ENCODE measurements at regions of chr14 and their contacts with region 1.

Region 1: DNA sequence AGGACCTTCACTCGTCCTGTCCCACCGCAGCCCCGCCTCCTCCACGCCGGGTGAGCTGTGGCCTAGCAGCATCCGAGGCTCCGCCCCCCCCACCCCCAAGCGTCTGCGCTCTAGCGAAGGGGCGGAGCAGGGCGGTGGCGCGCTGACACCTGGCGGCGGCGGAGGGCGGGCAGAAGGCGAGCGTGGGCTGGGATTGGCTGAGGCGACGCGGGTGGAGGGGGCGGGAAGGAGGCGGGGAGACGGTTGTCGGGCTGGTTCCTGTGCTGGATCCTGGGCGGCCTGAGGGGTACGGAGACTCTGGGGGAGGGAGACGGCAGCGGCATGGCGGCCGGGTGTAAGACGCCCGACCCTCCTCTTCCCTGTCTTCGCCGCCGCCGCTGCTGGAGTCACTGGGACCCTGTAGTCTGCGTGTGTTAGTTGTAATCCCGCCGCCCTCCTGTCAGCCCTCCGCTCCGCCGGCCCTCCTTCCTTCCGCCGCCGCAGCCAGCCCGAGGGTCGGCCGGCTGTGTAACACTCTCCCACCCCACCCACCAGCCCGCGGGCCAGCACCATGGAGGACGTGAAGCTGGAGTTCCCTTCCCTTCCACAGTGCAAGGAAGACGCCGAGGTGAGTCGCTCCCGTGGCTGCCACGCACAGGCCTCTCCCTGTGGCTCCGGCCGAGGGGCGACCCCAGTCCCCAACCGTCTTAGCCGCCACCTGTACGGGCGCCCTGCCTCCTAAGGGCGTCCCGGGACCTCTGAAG is at the start of gene STYX:
- DNase-seq: peak; percentile 96
- H3K4me3 Mint-ChIP-seq: peak within 1 kb of the TSS; percentile 95
- H3K27ac Mint-ChIP-seq: peak within 1 kb of the TSS; percentile 80
- H3K4me1 Mint-ChIP-seq: peaks cover 18% of the 10 kb centered on the region
- H3K27me3 Mint-ChIP-seq: no peaks in the 10 kb centered on the region
- total RNA-seq, gene STYX: 16.3 and 16.5 TPM in 2 replicates

Region 2: DNA sequence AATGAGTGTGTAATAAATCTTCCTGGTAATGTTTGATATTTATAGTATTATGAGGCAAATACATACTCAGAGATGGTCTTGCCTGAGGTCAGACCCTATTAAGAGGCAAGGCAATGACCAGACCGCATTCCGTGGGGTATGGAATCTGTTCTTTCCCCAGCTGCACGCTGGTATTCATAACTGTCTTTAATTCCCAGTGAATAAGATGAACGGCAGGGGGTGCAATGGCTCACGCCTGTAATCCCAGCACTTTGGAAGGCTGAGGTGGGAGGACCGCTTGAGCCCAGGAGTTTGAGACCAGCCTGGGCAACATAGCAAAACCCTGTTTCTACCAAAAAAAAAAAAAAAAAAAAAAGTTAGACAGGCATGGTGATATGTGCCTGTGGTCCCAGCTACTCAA is 79.3 kb before region 1 on chr14:
- intact Hi-C with region 1: no loop called
- DNase-seq: no peak
- H3K4me3 Mint-ChIP-seq: no peak overlapping the region
- H3K27ac Mint-ChIP-seq: no peak overlapping the region
- H3K4me1 Mint-ChIP-seq: peaks cover 6% of the 10 kb centered on the region
- H3K27me3 Mint-ChIP-seq: no peaks in the 10 kb centered on the region

Region 3: GRCh38 chr14:52678591-52678990 is 51.5 kb before region 1 on chr14:
- intact Hi-C with region 1: loop called (anchors 10 kb)
- DNase-seq: no peak
- H3K4me3 Mint-ChIP-seq: no peak overlapping the region
- H3K27ac Mint-ChIP-seq: no peak overlapping the region
- H3K4me1 Mint-ChIP-seq: peaks cover 3% of the 10 kb centered on the region
- H3K27me3 Mint-ChIP-seq: no peaks in the 10 kb centered on the region

Region 4: DNA sequence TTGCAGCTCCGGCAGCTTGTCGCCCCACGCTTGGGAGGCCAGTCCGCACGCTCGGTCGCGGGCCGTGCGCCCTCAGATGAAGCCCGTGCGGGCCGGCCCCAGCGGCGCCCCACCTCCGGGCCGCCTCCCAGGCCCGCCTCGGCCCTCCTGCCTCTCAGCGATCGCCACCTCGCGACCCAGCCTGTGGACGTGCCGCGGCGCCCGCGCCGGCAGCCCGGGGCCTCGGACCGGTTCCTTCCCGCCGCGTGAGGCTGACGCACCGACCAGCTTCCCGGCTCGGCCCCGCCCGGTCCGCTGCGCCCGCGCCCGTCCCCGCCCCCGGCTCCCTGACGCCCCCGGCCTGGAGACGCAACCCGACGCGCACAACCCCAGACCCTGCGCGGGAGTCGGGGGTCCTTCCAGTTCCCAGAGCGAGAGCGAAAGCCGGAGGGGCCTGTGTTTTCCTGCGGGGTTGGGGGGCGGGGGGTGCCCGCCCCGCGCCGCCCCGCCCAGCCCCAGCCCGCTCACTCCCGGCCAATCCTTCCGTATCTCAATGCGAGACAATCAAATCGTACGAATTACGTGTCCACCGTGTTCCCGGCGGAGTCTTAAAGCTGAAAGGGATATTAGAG is 34.5 kb before region 1 on chr14 and contains the start of gene ERO1A:
- intact Hi-C with region 1: loop called (anchors 1 kb)
- DNase-seq: peak; percentile 65
- H3K4me3 Mint-ChIP-seq: peak within 1 kb of the TSS; percentile 98
- H3K27ac Mint-ChIP-seq: peak within 1 kb of the TSS; percentile 99
- H3K4me1 Mint-ChIP-seq: peaks cover 29% of the 10 kb centered on the region
- H3K27me3 Mint-ChIP-seq: no peaks in the 10 kb centered on the region
- total RNA-seq, gene ERO1A: 219 and 226 TPM in 2 replicates

Region 5: DNA sequence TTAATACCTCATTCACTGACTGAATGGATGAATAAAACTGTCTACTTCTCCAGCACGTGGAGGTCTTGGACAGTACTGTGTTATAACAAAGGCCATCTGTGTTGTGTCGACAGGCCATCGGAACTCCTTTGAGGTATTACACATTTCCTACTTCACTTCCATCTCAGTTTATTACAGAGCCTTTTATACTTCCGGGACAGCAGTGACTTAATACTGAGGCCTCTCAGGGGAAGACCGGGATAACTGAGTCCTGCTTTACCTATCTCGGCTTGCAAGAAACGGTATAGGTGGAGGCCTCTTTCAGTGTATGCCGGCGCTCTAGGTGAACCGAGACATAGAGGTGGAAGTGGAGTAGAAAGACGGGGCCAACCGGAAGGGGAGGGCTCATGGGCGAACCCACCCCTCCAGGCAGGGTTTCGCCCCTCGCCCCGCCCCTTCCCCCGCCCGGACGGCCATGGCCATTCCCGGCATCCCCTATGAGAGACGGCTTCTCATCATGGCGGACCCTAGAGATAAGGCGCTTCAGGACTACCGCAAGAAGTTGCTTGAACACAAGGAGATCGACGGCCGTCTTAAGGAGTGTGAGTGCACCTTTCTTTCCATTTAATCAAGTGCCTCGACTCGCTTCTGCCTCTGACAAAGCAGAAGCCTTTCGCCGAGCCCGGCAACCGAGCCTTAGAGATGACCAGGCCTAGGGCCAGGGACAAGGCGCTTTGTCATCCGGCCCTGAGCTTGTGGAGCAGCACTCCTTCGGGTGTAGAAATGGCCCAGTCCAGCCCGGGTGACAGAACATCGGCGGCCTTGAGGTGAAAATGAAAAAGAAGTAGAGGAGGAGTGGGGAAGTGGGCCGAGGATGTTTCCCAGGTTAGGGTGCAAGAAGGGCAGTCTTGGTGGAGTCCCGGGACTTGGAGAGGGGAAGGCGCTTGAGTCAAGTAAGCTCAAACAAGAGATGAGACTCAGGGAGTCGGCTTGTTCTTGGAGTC is 23.1 kb before region 1 on chr14 and contains the start of gene PSMC6:
- intact Hi-C with region 1: loop called (anchors 1 kb)
- DNase-seq: peak; percentile 84
- H3K4me3 Mint-ChIP-seq: peak within 1 kb of the TSS; percentile 99
- H3K27ac Mint-ChIP-seq: peak within 1 kb of the TSS; percentile 93
- H3K4me1 Mint-ChIP-seq: peaks cover 39% of the 10 kb centered on the region
- H3K27me3 Mint-ChIP-seq: no peaks in the 10 kb centered on the region
- total RNA-seq, gene PSMC6: 144 and 155 TPM in 2 replicates

Region 6: GRCh38 chr14:52741865-52742264 is 11.8 kb after region 1 on chr14:
- intact Hi-C with region 1: loop called (anchors 1 kb)
- DNase-seq: no peak
- H3K4me3 Mint-ChIP-seq: peak overlapping the region; percentile 64
- H3K27ac Mint-ChIP-seq: peak overlapping the region; percentile 89
- H3K4me1 Mint-ChIP-seq: peaks cover 44% of the 10 kb centered on the region
- H3K27me3 Mint-ChIP-seq: no peaks in the 10 kb centered on the region

Region 7: GRCh38 chr14:52791203-52792096 is 61.4 kb after region 1 on chr14 and contains the start of gene GNPNAT1:
- intact Hi-C with region 1: loop called (anchors 5 kb)
- DNase-seq: peak; percentile 85
- H3K4me3 Mint-ChIP-seq: peak within 1 kb of the TSS; percentile 89
- H3K27ac Mint-ChIP-seq: peak within 1 kb of the TSS; percentile 73
- H3K4me1 Mint-ChIP-seq: peaks cover 27% of the 10 kb centered on the region
- H3K27me3 Mint-ChIP-seq: no peaks in the 10 kb centered on the region
- total RNA-seq, gene GNPNAT1: 29.4 and 34.8 TPM in 2 replicates